ENCODE measurements at regions of chr11 and their contacts with region 1.

Region 1: GRCh38 chr11:77547863-77548551 is 41.7 kb upstream of the AQP11 start:
- DNase-seq: peak; percentile 61 to 85 (median 80)
- H3K4me3 ChIP-seq: no peak overlapping the region
- H3K27ac ChIP-seq: no peak overlapping the region
- H3K4me1 ChIP-seq: no peaks in the 10 kb centered on the region
- H3K27me3 ChIP-seq: no peaks in the 10 kb centered on the region

Region 2: GRCh38 chr11:77198440-77198849 is 349.6 kb before region 1 on chr11:
- CTCF ChIA-PET with region 1: interaction called, 19 read pairs
- POLR2A ChIA-PET with region 1: no interaction called
- DNase-seq: peak; percentile 27 to 46 (median 45)
- H3K4me3 ChIP-seq: no peak overlapping the region
- H3K27ac ChIP-seq: no peak overlapping the region
- H3K4me1 ChIP-seq: peaks cover 0 to 4% (median 0%) of the 10 kb centered on the region in 4 experiments
- H3K27me3 ChIP-seq: no peaks in the 10 kb centered on the region

Region 3: DNA sequence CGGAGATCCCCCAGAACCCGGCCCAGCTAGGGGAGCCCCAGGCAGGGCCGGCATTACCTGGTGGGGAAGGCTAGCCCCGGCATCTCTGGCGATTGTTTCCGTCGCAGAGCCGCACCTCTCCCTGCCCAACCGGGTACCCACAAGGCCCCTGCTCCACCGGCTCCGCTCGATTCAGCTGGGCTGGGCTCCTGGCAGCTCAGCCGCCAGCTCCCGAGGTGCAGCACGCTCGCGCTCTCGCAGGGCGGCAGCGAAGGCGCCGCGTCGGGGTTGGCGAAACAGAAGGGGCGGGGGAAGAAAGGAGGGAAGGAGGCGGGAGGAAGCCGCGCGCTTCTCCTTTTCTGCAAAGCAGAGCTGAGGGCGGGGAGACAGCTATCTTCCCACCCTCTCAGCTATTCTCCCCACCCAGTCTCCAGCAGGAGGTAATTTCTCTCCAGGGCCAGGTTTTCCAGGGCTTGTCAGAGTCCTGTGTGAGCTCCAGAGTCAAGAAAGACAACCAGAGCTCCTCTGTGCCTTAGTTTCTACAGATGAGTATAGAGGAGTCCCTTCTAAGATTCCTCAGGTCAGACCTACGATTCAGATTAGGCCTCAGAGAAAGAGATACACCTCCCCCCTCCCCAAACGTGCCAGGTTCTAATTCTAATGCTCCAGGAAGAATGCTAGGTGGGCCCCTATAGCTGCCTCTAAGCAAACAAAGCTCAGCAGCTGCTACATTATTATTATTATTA is 136.1 kb before region 1 on chr11:
- CTCF ChIA-PET with region 1: interaction called, 13 read pairs
- POLR2A ChIA-PET with region 1: no interaction called
- DNase-seq: peak; percentile 84 to 92 (median 89)
- H3K4me3 ChIP-seq: peak overlapping the region; percentile 36 to 78 (median 70)
- H3K27ac ChIP-seq: peak overlapping the region in 1 of 2 experiments; percentile 55
- H3K4me1 ChIP-seq: peaks cover 13 to 47% (median 31%) of the 10 kb centered on the region in 4 experiments
- H3K27me3 ChIP-seq: no peaks in the 10 kb centered on the region

Region 4: GRCh38 chr11:77473801-77474683 is 74.0 kb before region 1 on chr11 and contains the start of gene PAK1:
- CTCF ChIA-PET with region 1: interaction called, 14 read pairs
- POLR2A ChIA-PET with region 1: no interaction called
- DNase-seq: peak; percentile 96 to 98 (median 97)
- H3K4me3 ChIP-seq: peak within 1 kb of the TSS; percentile 15 to 85 (median 67)
- H3K27ac ChIP-seq: peak within 1 kb of the TSS in 1 of 2 experiments; percentile 21
- H3K4me1 ChIP-seq: peaks cover 10 to 27% (median 19%) of the 10 kb centered on the region in 4 experiments
- H3K27me3 ChIP-seq: peaks cover 0 to 19% (median 11%) of the 10 kb centered on the region in 5 experiments

Region 5: GRCh38 chr11:77512092-77512491 is 35.9 kb before region 1 on chr11:
- CTCF ChIA-PET with region 1: interaction called, 12 read pairs
- POLR2A ChIA-PET with region 1: no interaction called
- DNase-seq: peak; percentile 28 to 81 (median 80)
- H3K4me3 ChIP-seq: no peak overlapping the region
- H3K27ac ChIP-seq: no peak overlapping the region
- H3K4me1 ChIP-seq: peaks cover 4 to 27% (median 16%) of the 10 kb centered on the region in 4 experiments
- H3K27me3 ChIP-seq: no peaks in the 10 kb centered on the region